Activated CD4-positive, alpha-beta memory T cell treated with anti-CD3 and anti-CD28 coated beads for 36 hours (primary cell): ENCODE measurements at regions of chr3 and their contacts with region 1.

Region 1: GRCh38 chr3:119463171-119464169 is at the start of gene TMEM39A:
- DNase-seq: peak; percentile 99
- H3K4me3 Mint-ChIP-seq: peak within 1 kb of the TSS; percentile 97
- H3K27ac Mint-ChIP-seq: peak within 1 kb of the TSS; percentile 98
- H3K4me1 Mint-ChIP-seq: peaks cover 41% of the 10 kb centered on the region
- H3K27me3 Mint-ChIP-seq: no peaks in the 10 kb centered on the region
- total RNA-seq, gene TMEM39A: 33.9 to 34.3 TPM

Region 2: GRCh38 chr3:119279101-119279554 is 184.3 kb before region 1 on chr3:
- CTCF ChIA-PET with region 1: interaction called, 5 read pairs
- POLR2A ChIA-PET with region 1: no interaction called
- intact Hi-C with region 1: loop called (anchors 2 kb)
- DNase-seq: no peak
- H3K4me3 Mint-ChIP-seq: no peak overlapping the region
- H3K27ac Mint-ChIP-seq: no peak overlapping the region
- H3K4me1 Mint-ChIP-seq: peaks cover 7% of the 10 kb centered on the region
- H3K27me3 Mint-ChIP-seq: no peaks in the 10 kb centered on the region

Region 3: GRCh38 chr3:119322835-119323722 is 140.4 kb before region 1 on chr3:
- CTCF ChIA-PET with region 1: no interaction called
- POLR2A ChIA-PET with region 1: interaction called, 5 read pairs
- intact Hi-C with region 1: loop called (anchors 1 kb)
- DNase-seq: peak; percentile 97
- H3K4me3 Mint-ChIP-seq: peak overlapping the region; percentile 82
- H3K27ac Mint-ChIP-seq: peak overlapping the region; percentile 95
- H3K4me1 Mint-ChIP-seq: peaks cover 41% of the 10 kb centered on the region
- H3K27me3 Mint-ChIP-seq: no peaks in the 10 kb centered on the region

Region 4: DNA sequence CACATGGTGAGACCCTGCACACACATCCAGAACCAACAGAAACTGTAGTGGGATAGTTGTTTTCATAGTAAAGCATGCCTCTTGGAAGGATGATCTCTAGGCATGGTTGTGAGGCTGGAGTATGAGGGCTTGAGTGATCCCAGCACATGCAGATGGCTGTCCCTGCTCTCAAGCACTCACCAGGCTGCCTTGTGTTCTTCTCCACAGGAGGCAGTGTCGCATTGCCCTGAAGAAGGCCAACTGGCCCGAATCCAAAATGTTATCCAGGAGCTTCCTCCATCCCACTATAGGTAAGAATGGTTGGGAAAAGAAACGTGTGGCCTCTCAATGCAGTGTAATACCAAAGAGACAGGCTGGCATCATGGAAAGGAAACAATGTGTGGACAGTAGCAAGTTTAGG is 82.8 kb before region 1 on chr3:
- CTCF ChIA-PET with region 1: no interaction called
- POLR2A ChIA-PET with region 1: no interaction called
- intact Hi-C with region 1: no loop called
- DNase-seq: no peak
- H3K4me3 Mint-ChIP-seq: no peak overlapping the region
- H3K27ac Mint-ChIP-seq: no peak overlapping the region
- H3K4me1 Mint-ChIP-seq: no peaks in the 10 kb centered on the region
- H3K27me3 Mint-ChIP-seq: no peaks in the 10 kb centered on the region

Region 5: GRCh38 chr3:119559441-119559963 is 96.0 kb after region 1 on chr3 and contains the start of gene CD80:
- CTCF ChIA-PET with region 1: interaction called, 3 read pairs
- POLR2A ChIA-PET with region 1: interaction called, 4 read pairs
- intact Hi-C with region 1: loop called (anchors 1 kb)
- DNase-seq: peak; percentile 84
- H3K4me3 Mint-ChIP-seq: peak within 1 kb of the TSS; percentile 24
- H3K27ac Mint-ChIP-seq: peak within 1 kb of the TSS; percentile 56
- H3K4me1 Mint-ChIP-seq: peaks cover 24% of the 10 kb centered on the region
- H3K27me3 Mint-ChIP-seq: no peaks in the 10 kb centered on the region
- total RNA-seq, gene CD80: 3.4 to 3.7 TPM

Region 6: DNA sequence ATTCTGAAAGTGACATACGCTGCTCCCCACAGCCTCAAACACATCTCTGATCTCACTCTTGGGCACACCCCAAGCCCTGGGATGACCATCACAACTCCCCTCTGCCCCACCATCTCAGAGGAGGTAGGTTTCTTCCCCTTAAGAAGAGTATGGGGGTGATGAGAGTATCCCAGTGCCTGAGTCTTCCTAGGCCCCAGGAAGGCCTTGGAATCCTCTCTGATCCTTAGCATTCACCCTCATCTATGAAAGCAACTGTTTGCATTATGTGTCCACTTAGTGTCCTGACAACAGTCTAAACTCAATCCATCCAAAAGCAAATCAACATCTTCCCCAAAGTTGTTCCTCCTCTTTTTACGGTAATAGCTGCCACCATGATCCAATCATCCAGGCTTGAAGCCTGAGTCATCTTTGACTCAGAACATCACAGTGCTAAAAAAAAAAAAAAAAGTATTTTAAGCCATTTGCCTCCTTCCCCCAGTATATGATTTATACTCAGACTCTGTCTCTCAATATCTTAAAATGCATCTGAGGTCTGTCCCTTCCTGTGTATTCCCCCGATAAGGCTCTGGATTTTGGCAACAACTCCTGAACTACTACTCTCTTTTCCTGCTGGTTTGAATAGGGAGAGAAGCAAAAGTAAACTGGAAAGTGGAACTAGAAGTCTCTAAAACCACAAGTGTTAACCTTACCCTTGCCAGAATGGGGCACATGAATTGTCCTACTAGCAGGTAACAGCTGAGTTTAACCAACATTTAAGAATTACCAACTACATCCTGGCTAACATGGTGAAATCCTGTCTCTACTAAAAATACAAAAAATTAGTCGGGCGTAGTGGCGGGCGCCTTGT is 174.4 kb after region 1 on chr3:
- CTCF ChIA-PET with region 1: interaction called, 4 read pairs
- POLR2A ChIA-PET with region 1: interaction called, 4 read pairs
- intact Hi-C with region 1: loop called (anchors 1 kb)
- DNase-seq: no peak
- H3K4me3 Mint-ChIP-seq: no peak overlapping the region
- H3K27ac Mint-ChIP-seq: peak overlapping the region; percentile 92
- H3K4me1 Mint-ChIP-seq: peaks cover 45% of the 10 kb centered on the region
- H3K27me3 Mint-ChIP-seq: no peaks in the 10 kb centered on the region

Region 7: DNA sequence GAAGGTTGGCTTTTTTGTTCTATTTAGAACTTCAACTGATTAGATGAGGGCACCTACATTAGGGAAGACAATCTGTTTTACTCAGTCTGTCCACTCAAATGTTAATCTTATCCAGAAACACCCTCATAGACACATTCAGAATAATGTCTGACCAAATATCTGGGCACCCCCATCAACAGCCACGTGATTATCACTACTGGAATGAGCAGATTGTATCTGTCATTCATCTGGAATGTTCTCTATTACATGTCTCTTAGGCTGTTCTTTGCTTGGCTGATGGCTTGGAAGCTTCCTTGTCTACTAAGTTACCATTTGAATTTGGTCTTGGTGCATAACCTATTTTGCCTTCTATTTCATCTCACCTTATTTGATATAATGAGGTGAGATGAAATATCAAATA is 901.4 kb after region 1 on chr3:
- CTCF ChIA-PET with region 1: no interaction called
- POLR2A ChIA-PET with region 1: no interaction called
- intact Hi-C with region 1: no loop called
- DNase-seq: no peak
- H3K4me3 Mint-ChIP-seq: no peak overlapping the region
- H3K27ac Mint-ChIP-seq: no peak overlapping the region
- H3K4me1 Mint-ChIP-seq: no peaks in the 10 kb centered on the region
- H3K27me3 Mint-ChIP-seq: peaks cover 16% of the 10 kb centered on the region

Region 8: DNA sequence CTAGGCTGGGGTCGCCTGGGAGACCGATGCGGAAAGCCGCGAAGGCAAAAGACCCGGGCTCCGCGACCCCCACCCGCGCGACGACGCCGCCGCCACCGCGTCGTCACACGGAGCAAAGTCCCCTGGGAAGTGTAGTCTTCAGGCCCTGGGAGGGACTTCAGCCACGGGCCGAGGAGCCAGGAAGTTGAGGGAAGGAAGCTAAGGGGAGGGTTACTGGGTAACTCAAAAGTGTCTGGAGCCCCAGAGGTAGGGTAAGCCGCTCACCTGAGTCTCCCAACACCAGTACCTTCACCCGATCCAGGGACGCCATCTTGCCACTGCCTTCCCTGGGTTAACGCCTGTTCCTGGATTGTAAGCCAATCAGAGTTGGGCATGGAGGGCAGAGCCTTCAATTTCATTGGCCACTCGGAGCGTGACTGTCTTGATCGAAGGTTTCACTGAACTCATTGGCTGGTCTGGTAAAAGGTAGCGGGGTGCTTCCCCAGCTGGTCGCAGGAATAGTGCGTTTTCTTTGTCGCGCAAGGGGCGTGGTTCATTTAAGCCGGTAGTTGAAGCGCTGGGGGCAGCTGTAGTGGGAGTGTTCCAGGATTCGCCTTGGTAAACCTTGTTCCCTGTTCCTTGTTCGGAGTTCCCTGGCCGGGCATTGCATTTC is 1278.9 kb after region 1 on chr3 and contains the starts of genes GTF2E1 and RABL3:
- CTCF ChIA-PET with region 1: no interaction called
- POLR2A ChIA-PET with region 1: no interaction called
- intact Hi-C with region 1: loop called (anchors 10 kb)
- DNase-seq: peak; percentile 98
- H3K4me3 Mint-ChIP-seq: peak within 1 kb of the TSS; percentile 96
- H3K27ac Mint-ChIP-seq: peak within 1 kb of the TSS; percentile 94
- H3K4me1 Mint-ChIP-seq: peaks cover 28% of the 10 kb centered on the region
- H3K27me3 Mint-ChIP-seq: peaks cover 2% of the 10 kb centered on the region
- total RNA-seq, gene GTF2E1: 18.4 to 19.8 TPM
- total RNA-seq, gene RABL3: 28.7 to 30.0 TPM